Sigmoid colon (tissue), 7 donors: ENCODE measurements at regions of chr1 and their contacts with region 1.

Region 1: GRCh38 chr1:152189657-152190442 is 30.8 kb upstream of the RPTN start:
- DNase-seq: peak; percentile 67
- H3K4me3 ChIP-seq: peak overlapping the region; percentile 38 to 62 (median 54)
- H3K27ac ChIP-seq: peak overlapping the region; percentile 63 to 77 (median 70)
- H3K4me1 ChIP-seq: peaks cover 0 to 22% (median 11%) of the 10 kb centered on the region in 4 donors
- H3K27me3 ChIP-seq: no peaks in the 10 kb centered on the region
- CTCF ChIP-seq: peak in 3 of 4 experiments; percentile 52 to 63 (median 55)
- EP300 ChIP-seq: no peak
- POLR2A ChIP-seq: no peak

Region 2: DNA sequence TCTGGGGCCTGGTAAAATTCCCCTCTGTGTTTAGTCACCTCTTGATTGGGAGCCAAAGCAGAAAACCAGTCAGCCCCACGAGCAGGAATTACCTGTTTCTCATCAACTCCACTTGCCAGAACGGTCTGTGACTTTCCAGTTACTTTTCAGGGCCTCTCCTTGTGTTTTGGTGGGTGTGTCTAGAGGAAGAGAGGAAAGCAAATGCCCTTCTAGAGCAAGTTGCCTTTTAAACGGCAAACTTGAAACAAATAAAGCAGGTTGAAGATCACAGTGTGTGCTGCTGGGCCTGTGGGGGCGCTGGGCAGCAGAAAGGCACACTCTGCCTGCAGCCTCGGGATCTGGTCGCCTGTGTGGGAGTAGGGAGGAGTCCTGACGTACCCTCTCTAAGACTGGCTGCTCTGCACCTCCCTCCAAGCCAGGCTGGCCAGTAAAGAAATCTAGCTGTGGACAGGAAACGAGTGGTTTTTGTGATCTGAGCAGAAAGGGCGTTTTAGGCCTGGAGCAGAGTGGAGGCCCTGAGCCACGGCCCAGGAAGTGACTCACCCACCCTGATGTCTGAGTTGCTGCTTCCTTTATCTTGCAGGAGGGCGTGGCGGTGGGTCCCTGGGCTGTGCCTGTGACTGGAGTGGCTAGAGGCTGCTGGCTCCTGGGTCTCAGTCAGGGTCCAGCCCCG is 142.0 kb before region 1 on chr1:
- intact Hi-C with region 1: loop called (anchors 1 kb)
- DNase-seq: peak; percentile 96
- H3K4me3 ChIP-seq: peak overlapping the region in 2 of 4 donors; percentile 20 to 27
- H3K27ac ChIP-seq: peak overlapping the region; percentile 89 to 95 (median 92)
- H3K4me1 ChIP-seq: peaks cover 0 to 23% (median 19%) of the 10 kb centered on the region in 4 donors
- H3K27me3 ChIP-seq: no peaks in the 10 kb centered on the region
- CTCF ChIP-seq: peak in 3 of 4 experiments; percentile 24 to 53 (median 48)
- EP300 ChIP-seq: peak in 1 of 4 donors; percentile 76
- POLR2A ChIP-seq: peak; percentile 43 to 57

Region 3: GRCh38 chr1:152141974-152142584 is 47.8 kb before region 1 on chr1:
- intact Hi-C with region 1: loop called (anchors 1 kb)
- DNase-seq: no peak
- H3K4me3 ChIP-seq: no peak overlapping the region
- H3K27ac ChIP-seq: no peak overlapping the region
- H3K4me1 ChIP-seq: no peaks in the 10 kb centered on the region
- H3K27me3 ChIP-seq: peaks cover 0 to 3% (median 0%) of the 10 kb centered on the region in 3 donors
- CTCF ChIP-seq: peak; percentile 53 to 76 (median 62)
- EP300 ChIP-seq: no peak
- POLR2A ChIP-seq: no peak

Region 4: DNA sequence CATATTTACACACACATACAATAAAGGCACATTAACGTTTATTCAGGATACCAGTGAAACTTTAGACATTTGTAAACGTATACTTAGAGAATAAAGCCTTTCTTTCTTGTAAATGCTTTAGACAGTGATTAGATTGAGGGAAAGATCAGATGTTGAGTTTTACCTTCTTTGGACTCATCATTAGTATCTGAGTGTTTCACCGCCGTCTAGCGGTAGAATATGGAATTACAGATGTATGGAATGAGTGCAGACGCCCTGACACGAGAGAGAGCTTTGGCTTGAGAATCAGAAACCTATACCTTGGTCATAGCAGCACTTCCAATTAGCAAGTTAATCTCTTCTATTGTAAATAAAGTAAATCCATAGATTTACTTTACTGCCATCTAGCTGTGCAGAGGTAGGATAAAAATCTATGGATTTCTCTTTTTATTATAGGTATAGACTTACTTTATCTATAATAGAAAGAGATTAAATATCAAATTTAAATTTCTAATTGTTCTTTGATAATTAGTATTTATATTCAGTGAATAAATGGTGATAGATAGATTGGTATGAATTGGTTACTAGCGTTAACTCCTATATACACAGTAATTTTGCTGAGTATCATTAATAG is 157.4 kb after region 1 on chr1:
- intact Hi-C with region 1: loop called (anchors 10 kb)
- DNase-seq: no peak
- H3K4me3 ChIP-seq: no peak overlapping the region
- H3K27ac ChIP-seq: no peak overlapping the region
- H3K4me1 ChIP-seq: no peaks in the 10 kb centered on the region
- H3K27me3 ChIP-seq: no peaks in the 10 kb centered on the region
- CTCF ChIP-seq: peak; percentile 22 to 64 (median 48)
- EP300 ChIP-seq: no peak
- POLR2A ChIP-seq: no peak

Region 5: DNA sequence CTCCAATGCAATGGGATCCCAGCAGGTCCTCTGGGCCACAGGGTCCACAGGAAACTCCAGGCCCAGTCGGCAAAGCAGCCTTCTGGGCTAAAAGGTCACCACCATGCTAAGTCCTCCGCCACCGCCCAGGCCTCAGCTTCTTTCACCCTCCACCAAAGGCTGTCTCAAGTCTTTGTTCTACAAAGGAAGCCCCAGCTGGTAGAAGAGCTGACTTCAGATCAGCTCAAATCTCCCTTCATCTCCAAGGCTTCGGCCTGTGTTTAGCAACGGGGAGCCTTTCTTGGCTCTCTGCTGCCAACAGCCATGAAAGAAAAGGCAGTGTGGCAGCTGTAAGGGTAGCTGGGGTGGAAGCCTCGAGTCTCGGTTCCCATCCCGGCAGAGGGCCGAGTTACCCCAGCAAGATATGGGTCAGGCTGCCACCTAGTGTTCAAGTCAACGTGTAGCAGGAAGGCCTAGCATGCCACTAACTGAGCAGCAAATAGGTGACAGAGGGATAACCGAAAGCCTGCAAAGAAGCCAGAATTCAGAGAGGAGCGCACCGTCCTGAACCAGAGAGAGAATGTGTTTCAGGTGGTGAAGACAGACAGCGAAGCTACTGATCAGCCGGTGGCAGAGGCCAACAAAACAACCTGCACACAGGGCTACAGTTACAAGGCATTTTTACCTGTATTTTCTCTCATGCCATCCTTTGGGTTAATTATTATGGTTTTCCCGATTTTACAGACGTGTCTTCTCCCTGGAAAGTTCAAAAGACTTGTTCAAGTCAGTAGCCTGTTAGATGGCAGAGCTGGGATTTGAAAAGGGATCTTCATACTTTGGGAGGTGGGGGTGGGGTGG is 251.0 kb after region 1 on chr1:
- intact Hi-C with region 1: loop called (anchors 5 kb)
- DNase-seq: peak; percentile 85
- H3K4me3 ChIP-seq: no peak overlapping the region
- H3K27ac ChIP-seq: no peak overlapping the region
- H3K4me1 ChIP-seq: peaks cover 0 to 33% (median 12%) of the 10 kb centered on the region in 4 donors
- H3K27me3 ChIP-seq: no peaks in the 10 kb centered on the region
- CTCF ChIP-seq: peak; percentile 53 to 78 (median 68)
- EP300 ChIP-seq: no peak
- POLR2A ChIP-seq: no peak